Posterior vena cava (tissue), 2 donors: ENCODE measurements at regions of chr1 and their contacts with region 1.

Region 1: DNA sequence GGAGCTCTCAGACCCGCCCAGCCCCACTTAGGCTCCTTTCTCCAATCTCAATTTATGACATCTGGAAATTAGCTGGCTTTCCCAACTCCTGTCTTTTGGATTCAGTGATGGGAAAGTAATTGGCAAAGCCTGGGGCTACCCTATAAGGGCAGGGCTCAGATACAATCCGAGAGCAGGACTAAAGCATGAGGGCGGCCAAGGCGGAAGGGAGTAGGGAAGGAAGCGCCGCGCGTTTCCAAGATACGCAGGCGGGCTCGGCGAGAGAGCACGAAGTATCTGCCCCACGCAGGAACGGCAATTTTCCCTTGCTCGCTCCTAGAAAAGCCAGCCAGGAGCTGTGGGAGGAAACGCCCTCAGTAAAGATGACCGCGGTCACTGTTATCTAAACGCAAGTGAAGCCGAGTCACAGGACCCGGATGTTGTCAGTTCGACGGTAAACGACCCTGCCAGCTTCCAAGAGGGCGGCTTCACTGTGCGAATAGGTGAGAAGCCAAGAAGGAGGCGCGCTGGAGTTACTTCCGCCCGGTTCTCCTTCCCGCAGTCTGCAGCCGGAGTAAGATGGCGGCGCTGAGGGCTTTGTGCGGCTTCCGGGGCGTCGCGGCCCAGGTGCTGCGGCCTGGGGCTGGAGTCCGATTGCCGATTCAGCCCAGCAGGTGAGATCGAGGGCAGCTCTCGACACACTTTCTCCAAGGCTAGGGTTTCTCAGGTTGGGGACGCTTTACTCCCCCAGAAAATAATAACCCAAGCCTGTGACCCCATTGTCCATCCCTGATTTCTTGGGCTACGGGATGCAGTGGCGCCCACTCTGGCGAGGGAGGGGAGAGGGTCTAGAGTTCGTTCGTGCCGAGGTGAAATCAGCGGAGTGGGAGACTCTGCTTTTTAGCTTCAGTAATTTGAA is at the start of gene NDUFS2:
- DNase-seq: peak; percentile 99
- total RNA-seq, gene NDUFS2: 54.3 to 57.9 TPM

Region 2: GRCh38 chr1:161242313-161242712 is 40.2 kb after region 1 on chr1:
- intact Hi-C with region 1: loop called in 1 of 2 experiments (anchors 1 kb)
- DNase-seq: no peak